K562 (cell line): ENCODE measurements at regions of chr9 and their contacts with region 1.

Region 1: GRCh38 chr9:130682490-130683121 is 11.0 kb upstream of the EXOSC2 start:
- DNase-seq: peak; percentile 71 to 78 (median 76)
- ATAC-seq: peak; percentile 67
- H3K4me3 ChIP-seq: peak overlapping the region; percentile 66
- H3K27ac ChIP-seq: no peak overlapping the region
- H3K4me1 ChIP-seq: peaks cover 8 to 19% of the 10 kb centered on the region in 2 experiments; a peak in 4 of 5 replicates
- H3K27me3 ChIP-seq: peaks cover 2 to 15% of the 10 kb centered on the region in 2 experiments; a peak in 3 of 5 replicates
- CTCF ChIP-seq: peak; percentile 86 to 90 (median 88)
- EP300 ChIP-seq: no peak
- POLR2A ChIP-seq: no peak
- RAD21 ChIP-seq: peak; percentile 94 to 95

Region 2: GRCh38 chr9:130461218-130461630 is 221.4 kb before region 1 on chr9:
- CTCF ChIA-PET with region 1: interaction called, 105 read pairs
- POLR2A ChIA-PET with region 1: interaction called, 11 read pairs
- in situ Hi-C with region 1: no loop called
- intact Hi-C with region 1: loop called (anchors 1 kb)
- DNase-seq: peak; percentile 71 to 81 (median 80)
- ATAC-seq: peak; percentile 84
- H3K4me3 ChIP-seq: no peak overlapping the region
- H3K27ac ChIP-seq: no peak overlapping the region
- H3K4me1 ChIP-seq: peaks cover 0 to 27% of the 10 kb centered on the region in 2 experiments; a peak in 2 of 5 replicates
- H3K27me3 ChIP-seq: peaks cover 5 to 36% of the 10 kb centered on the region in 2 experiments; a peak in 3 of 5 replicates
- CTCF ChIP-seq: peak; percentile 79 to 88 (median 81)
- EP300 ChIP-seq: no peak
- POLR2A ChIP-seq: no peak
- RAD21 ChIP-seq: peak; percentile 96 to 98

Region 3: GRCh38 chr9:130480331-130481072 is 202.1 kb before region 1 on chr9:
- CTCF ChIA-PET with region 1: interaction called, 6 read pairs
- POLR2A ChIA-PET with region 1: interaction called, 3 read pairs
- in situ Hi-C with region 1: no loop called
- intact Hi-C with region 1: loop called (anchors 5 kb)
- DNase-seq: peak; percentile 63 to 74 (median 67)
- ATAC-seq: peak; percentile 94
- H3K4me3 ChIP-seq: no peak overlapping the region
- H3K27ac ChIP-seq: no peak overlapping the region
- H3K4me1 ChIP-seq: peaks cover under 1 to 34% of the 10 kb centered on the region in 2 experiments; a peak in 4 of 5 replicates
- H3K27me3 ChIP-seq: peaks cover 3 to 25% of the 10 kb centered on the region in 2 experiments; a peak in 2 of 5 replicates
- CTCF ChIP-seq: peak; percentile 79 to 86 (median 82)
- EP300 ChIP-seq: no peak
- POLR2A ChIP-seq: no peak
- RAD21 ChIP-seq: peak; percentile 68 to 89

Region 4: GRCh38 chr9:130555968-130556367 is 126.6 kb before region 1 on chr9:
- CTCF ChIA-PET with region 1: no interaction called
- POLR2A ChIA-PET with region 1: no interaction called
- in situ Hi-C with region 1: no loop called
- intact Hi-C with region 1: no loop called
- DNase-seq: no peak
- ATAC-seq: no peak
- H3K4me3 ChIP-seq: no peak overlapping the region
- H3K27ac ChIP-seq: no peak overlapping the region
- H3K4me1 ChIP-seq: peaks cover 0 to 10% of the 10 kb centered on the region in 2 experiments; a peak in 3 of 5 replicates
- H3K27me3 ChIP-seq: peaks cover 0 to 22% of the 10 kb centered on the region in 2 experiments; a peak in 2 of 5 replicates
- CTCF ChIP-seq: no peak
- EP300 ChIP-seq: no peak
- POLR2A ChIP-seq: no peak
- RAD21 ChIP-seq: no peak

Region 5: DNA sequence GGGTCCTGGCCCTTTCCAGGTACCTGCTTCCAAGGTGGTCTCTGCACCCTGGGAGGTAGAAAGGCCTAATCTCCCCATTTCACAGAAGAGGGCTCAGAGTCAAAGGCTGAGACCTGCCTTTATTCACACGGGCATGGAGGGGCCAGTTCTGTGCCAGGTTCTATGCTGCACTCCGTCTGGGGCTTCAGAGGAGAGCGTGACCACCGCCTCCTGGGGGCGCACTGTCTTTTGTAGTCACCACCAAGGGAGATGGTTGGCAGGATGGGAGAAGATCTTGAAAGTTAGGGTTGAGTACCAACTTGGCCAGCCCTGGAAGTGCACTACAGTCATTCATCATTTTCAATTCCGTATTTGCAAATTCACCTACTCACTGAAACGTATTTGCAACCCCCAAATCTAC is 41.9 kb before region 1 on chr9:
- CTCF ChIA-PET with region 1: no interaction called
- POLR2A ChIA-PET with region 1: no interaction called
- in situ Hi-C with region 1: no loop called
- intact Hi-C with region 1: loop called (anchors 5 kb)
- DNase-seq: peak in 1 of 4 experiments; percentile 28
- ATAC-seq: peak; percentile 72
- H3K4me3 ChIP-seq: no peak overlapping the region
- H3K27ac ChIP-seq: no peak overlapping the region
- H3K4me1 ChIP-seq: peaks cover 0 to 11% of the 10 kb centered on the region in 2 experiments; a peak in 1 of 5 replicates
- H3K27me3 ChIP-seq: no peaks in the 10 kb centered on the region
- CTCF ChIP-seq: peak; percentile 21 to 57 (median 34); a peak in 4 of 6 replicates
- EP300 ChIP-seq: no peak
- POLR2A ChIP-seq: no peak
- RAD21 ChIP-seq: peak in 1 of 2 experiments; percentile 37; a peak in 2 of 4 replicates